Activated naive CD4-positive, alpha-beta T cell treated with anti-CD3 and anti-CD28 coated beads for 36 hours (primary cell): ENCODE measurements at regions of chr22 and their contacts with region 1.

Region 1: DNA sequence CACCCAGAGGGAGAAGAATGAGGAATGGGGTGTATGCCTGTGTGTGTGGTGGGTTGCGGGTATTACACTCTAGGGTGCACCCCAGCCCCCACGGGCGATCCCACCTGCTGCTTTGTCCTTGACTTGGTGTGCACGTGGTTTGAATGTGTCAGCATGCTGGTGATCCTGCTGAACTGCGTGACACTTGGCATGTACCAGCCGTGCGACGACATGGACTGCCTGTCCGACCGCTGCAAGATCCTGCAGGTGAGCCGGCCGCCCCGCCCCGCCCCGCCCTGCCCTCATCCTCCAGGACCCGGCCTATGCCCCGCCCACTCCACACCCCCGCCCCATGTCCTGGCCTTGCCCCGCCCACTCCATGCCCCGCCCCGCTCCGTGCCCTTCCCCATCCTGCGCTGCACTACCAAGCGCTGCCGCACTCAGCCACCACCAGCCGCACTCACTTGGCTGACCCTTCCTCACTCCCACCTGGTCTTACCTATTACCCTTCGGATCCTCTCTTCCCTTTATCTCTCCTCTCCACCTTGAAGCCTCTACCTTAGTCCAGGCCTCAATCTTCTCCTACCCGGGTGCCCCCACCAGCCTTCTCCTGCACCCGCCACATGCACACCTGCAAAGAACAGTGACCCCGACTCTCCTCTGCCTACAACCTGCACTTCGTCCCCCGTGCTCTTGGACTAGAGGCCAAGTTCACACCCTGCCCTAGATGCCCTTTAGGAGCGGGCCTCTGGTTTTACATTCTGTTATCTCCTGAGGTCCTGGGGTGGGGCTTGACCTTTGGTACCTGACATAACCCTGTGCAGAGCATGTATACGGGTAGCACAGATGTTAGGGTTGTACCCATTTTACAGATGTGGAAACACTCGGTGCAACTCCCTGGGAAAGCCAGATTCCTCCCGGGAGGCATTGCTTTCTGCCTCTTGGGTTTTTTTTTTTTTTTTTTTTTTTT is 27.7 kb downstream of the CACNA1I start:
- DNase-seq: peak; percentile 92
- H3K4me3 Mint-ChIP-seq: no peak overlapping the region
- H3K27ac Mint-ChIP-seq: no peak overlapping the region
- H3K4me1 Mint-ChIP-seq: peaks cover 27% of the 10 kb centered on the region
- H3K27me3 Mint-ChIP-seq: no peaks in the 10 kb centered on the region

Region 2: DNA sequence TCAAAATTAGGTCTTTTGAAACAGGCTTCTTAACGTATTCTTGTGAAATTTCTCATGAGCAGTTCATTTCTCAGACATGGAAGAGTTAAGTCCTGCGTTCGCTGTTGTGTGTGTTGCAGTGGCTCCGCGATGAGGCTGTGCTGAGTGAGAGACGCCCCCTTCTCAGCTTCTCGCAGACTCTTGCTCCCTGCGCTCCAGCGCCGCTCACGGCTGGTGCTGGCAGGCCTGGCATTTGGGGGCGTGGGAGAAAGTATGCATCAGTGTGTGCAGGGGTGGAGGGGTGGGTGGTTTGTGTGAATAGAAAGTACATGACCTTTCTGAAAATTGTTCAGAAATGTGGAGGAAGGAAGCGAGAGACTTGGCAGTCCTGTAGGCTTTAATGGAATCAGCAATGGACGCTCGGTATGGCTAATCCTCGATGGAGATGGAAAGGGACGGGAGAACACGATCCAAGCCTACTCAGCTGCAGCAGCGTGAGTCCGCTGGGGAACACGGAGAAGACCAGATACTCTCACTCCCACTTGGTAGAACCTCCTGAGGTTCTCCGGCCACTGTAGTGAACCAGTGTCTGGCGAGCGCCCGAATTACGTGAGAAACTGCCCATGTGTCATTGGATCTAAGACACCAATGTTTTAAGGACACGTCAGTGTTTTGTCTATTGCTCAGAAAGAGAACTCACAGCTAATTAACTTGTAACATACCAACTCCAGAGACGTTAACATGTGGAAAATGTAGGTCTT is 192.8 kb before region 1 on chr22:
- CTCF ChIA-PET with region 1: no interaction called
- intact Hi-C with region 1: no loop called
- DNase-seq: peak; percentile 55
- H3K4me3 Mint-ChIP-seq: no peak overlapping the region
- H3K27ac Mint-ChIP-seq: no peak overlapping the region
- H3K4me1 Mint-ChIP-seq: peaks cover 67% of the 10 kb centered on the region
- H3K27me3 Mint-ChIP-seq: no peaks in the 10 kb centered on the region

Region 3: DNA sequence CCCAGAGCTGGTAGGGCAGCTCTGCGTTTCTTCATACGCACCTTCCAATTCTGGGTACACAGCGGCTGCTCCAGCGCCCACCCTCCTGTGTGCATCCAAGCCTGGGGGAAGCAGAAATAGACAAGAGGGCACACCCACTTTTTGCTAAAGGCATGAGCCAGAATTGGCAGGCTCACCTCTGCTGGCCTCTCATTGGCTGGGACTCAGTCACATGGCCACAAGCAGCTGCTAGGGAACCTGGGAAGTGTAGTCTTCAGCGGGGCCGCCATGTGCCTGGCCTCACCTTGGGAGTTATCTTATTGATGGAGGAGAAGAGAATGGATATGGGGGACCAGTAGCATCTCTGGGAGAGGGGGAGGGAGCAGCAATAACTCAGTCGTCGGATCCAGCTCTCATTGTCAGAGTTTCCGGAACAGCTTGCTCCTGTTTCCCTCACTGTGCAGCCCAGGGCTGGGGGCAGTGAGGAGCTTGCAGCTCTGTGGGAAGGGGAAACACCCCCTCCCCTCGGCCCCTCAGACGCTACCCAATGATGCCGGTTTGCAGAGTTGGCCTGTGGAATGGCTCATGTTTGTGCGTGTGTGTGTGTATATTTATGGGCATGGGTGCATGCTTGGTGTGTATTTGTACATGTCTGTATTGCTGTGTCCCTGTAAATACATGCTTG is 108.0 kb before region 1 on chr22:
- CTCF ChIA-PET with region 1: no interaction called
- intact Hi-C with region 1: no loop called
- DNase-seq: peak; percentile 85
- H3K4me3 Mint-ChIP-seq: no peak overlapping the region
- H3K27ac Mint-ChIP-seq: no peak overlapping the region
- H3K4me1 Mint-ChIP-seq: peaks cover 5% of the 10 kb centered on the region
- H3K27me3 Mint-ChIP-seq: no peaks in the 10 kb centered on the region

Region 4: GRCh38 chr22:39612811-39613548 is 14.7 kb after region 1 on chr22:
- CTCF ChIA-PET with region 1: interaction called, 4 read pairs
- intact Hi-C with region 1: loop called (anchors 1 kb)
- DNase-seq: peak; percentile 85
- H3K4me3 Mint-ChIP-seq: no peak overlapping the region
- H3K27ac Mint-ChIP-seq: peak overlapping the region; percentile 86
- H3K4me1 Mint-ChIP-seq: peaks cover 25% of the 10 kb centered on the region
- H3K27me3 Mint-ChIP-seq: no peaks in the 10 kb centered on the region

Region 5: DNA sequence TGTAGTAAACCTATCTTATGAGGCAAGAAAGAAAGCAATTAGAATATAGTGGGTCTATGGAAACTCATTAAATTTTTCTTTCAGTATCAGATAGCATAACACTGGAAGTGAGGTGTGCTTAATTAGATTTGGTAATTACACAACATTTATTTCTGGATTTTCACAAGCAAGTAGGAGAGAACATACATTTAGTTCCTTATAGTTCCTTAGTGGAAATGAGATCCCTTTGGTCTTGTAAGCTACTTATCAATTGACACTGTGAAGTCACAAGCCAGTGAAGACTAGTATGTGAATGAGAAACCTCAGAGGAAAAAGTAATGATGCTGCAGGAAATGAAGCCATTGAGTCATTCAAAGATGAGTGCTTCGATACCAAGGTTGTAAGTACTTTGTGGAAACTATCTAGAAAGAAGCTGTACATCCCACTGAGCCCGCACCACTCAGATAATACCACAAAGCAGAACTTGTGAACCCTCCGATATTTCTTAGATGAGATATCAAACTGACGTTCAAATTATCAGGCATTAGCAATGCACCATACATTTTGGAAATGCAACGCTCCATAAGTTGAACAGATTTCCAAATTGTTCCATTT is 241.7 kb after region 1 on chr22:
- CTCF ChIA-PET with region 1: no interaction called
- intact Hi-C with region 1: loop called (anchors 1 kb)
- DNase-seq: peak; percentile 63
- H3K4me3 Mint-ChIP-seq: no peak overlapping the region
- H3K27ac Mint-ChIP-seq: no peak overlapping the region
- H3K4me1 Mint-ChIP-seq: peaks cover 13% of the 10 kb centered on the region
- H3K27me3 Mint-ChIP-seq: no peaks in the 10 kb centered on the region

Region 6: DNA sequence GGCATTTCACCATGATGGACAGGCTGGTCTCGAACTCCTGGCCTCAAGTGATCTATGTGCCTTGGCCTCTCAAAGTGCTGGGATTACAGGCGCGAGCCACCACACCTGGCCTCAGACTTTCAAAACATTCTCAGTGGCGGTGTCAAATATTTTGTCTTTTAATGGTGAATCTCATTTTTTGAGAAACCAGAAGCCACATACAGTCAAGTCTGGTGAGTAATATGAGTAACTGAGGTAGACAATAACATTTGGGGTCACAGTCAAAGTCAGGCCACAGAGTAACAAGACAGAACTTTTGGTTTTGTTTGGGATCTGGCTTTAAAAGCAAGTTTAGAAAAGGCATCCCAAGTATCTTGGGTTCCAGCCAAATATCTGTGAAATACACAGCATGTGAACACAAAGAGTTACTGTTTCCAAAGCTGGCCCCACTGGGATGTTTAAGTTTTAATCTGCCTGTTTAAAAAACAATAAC is 356.3 kb after region 1 on chr22:
- CTCF ChIA-PET with region 1: no interaction called
- intact Hi-C with region 1: loop called (anchors 5 kb)
- DNase-seq: no peak
- H3K4me3 Mint-ChIP-seq: no peak overlapping the region
- H3K27ac Mint-ChIP-seq: peak overlapping the region; percentile 32
- H3K4me1 Mint-ChIP-seq: peaks cover 86% of the 10 kb centered on the region
- H3K27me3 Mint-ChIP-seq: no peaks in the 10 kb centered on the region